ENCODE measurements at regions of chr7 and their contacts with region 1.

Region 1: DNA sequence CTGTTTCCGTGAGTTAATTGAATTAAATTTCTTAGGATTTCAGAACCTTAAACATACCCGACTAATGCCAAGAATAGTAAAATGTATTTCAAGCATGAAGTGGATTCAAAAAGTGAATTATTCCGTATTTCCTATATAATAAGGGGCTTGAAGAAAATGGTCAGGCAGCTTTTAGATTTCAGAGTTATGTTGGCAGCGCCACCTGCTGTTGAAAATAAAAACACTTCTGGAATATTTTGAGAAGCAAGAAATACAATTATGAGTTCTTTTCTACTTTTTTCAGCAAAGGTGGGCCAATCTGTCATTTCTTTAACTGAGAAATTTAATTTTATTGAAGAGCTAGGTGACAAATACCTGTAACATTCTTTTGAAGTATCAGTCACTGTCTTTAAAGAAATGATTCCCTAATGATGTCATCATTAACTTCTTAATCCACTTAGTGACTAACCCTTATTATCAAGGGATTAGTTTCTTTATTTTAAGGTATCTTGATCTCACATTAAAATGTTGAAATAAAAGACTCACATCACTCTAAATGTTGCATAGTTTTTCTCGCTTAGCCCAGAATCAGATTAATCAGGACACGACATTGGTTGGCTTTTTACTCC is 36.6 kb upstream of the AGR3 start:
- DNase-seq: peak; percentile 47 to 62
- H3K4me3 ChIP-seq: no peak overlapping the region
- H3K4me1 ChIP-seq: no peaks in the 10 kb centered on the region
- H3K27me3 ChIP-seq: no peaks in the 10 kb centered on the region

Region 2: DNA sequence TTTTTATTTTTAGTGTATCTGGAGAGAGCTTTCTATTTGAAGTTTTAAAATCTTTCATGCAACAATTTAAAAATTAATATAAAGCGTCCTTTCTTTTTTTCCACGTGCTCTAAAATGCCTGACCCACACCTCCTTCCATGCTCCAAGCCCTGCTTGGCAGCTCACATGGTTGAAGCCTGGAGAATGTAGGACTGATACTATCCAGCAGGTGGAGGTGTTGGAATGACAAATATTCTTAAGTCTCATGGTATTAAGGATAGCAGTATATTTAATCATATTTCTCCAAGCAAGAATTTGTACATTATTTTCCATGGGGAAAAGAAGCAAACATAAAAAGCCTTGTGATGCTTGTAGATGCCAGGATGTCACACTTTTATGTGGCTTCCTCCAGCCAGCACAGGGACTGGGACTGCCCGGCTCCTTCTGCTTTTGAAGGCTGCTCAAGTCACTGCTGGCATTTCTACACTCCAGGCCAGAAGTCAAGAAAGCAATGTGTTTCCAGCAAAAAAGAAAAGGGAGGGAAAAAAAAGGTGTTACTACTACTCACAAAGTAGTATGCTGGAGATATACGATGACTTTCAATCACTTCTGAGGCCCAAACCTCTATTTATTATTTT is 222.7 kb before region 1 on chr7:
- in situ Hi-C with region 1: loop called (anchors 10 kb)
- DNase-seq: peak; percentile 27 to 50
- H3K4me3 ChIP-seq: no peak overlapping the region
- H3K4me1 ChIP-seq: peaks cover 19% of the 10 kb centered on the region
- H3K27me3 ChIP-seq: no peaks in the 10 kb centered on the region

Region 3: GRCh38 chr7:16801111-16801542 is 117.3 kb before region 1 on chr7:
- in situ Hi-C with region 1: loop called (anchors 5 kb)
- DNase-seq: peak; percentile 22 to 71
- H3K4me3 ChIP-seq: no peak overlapping the region
- H3K4me1 ChIP-seq: peaks cover 7% of the 10 kb centered on the region
- H3K27me3 ChIP-seq: no peaks in the 10 kb centered on the region

Measured in HAP-1 (cell line).